ENCODE measurements at regions of chr3 and their contacts with region 1.

Region 1: GRCh38 chr3:67662733-67663132 is 8.3 kb upstream of the SUCLG2 start:
- DNase-seq: no peak
- ATAC-seq: no peak
- H3K4me3 ChIP-seq: no peak overlapping the region
- H3K27ac ChIP-seq: no peak overlapping the region
- H3K4me1 ChIP-seq: peaks cover 0 to 9% (median 0%) of the 10 kb centered on the region in 12 donors
- H3K27me3 ChIP-seq: no peaks in the 10 kb centered on the region
- CTCF ChIP-seq: no peak
- POLR2A ChIP-seq: no peak

Region 2: DNA sequence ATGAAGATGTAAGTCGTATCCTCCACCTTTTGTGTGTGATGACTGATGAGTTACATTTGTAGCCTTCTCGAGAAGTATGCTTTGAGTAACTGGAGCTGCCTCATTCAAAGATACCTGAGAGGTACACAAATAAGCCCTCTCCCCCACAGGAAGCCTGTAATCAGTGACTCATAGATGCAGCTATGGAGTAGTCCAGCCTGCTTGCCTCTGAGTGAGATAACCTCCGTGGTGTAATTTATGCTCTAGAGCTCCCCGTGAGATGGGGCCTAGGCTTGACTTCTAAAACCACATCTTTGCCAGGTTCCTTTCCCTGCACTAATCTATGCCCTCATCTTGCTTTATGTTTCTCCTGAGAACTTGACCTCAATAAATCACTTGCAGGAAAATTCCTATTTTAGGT is 300.0 kb before region 1 on chr3:
- intact Hi-C with region 1: no loop called
- DNase-seq: no peak
- ATAC-seq: no peak
- H3K4me3 ChIP-seq: no peak overlapping the region
- H3K27ac ChIP-seq: no peak overlapping the region
- H3K4me1 ChIP-seq: no peaks in the 10 kb centered on the region
- H3K27me3 ChIP-seq: no peaks in the 10 kb centered on the region
- CTCF ChIP-seq: no peak
- POLR2A ChIP-seq: no peak

Region 3: GRCh38 chr3:67605377-67605776 is 57.4 kb before region 1 on chr3:
- intact Hi-C with region 1: loop called in 1 of 10 experiments (anchors 10 kb)
- DNase-seq: no peak
- ATAC-seq: no peak
- H3K4me3 ChIP-seq: no peak overlapping the region
- H3K27ac ChIP-seq: no peak overlapping the region
- H3K4me1 ChIP-seq: peaks cover 0 to 25% (median 4%) of the 10 kb centered on the region in 12 donors
- H3K27me3 ChIP-seq: no peaks in the 10 kb centered on the region
- CTCF ChIP-seq: peak in 1 of 12 donors; percentile 16
- POLR2A ChIP-seq: no peak

Measured in heart left ventricle (tissue), 16 donors.